Panc1 (cell line): ENCODE measurements at regions of chr11 and their contacts with region 1.

Region 1: DNA sequence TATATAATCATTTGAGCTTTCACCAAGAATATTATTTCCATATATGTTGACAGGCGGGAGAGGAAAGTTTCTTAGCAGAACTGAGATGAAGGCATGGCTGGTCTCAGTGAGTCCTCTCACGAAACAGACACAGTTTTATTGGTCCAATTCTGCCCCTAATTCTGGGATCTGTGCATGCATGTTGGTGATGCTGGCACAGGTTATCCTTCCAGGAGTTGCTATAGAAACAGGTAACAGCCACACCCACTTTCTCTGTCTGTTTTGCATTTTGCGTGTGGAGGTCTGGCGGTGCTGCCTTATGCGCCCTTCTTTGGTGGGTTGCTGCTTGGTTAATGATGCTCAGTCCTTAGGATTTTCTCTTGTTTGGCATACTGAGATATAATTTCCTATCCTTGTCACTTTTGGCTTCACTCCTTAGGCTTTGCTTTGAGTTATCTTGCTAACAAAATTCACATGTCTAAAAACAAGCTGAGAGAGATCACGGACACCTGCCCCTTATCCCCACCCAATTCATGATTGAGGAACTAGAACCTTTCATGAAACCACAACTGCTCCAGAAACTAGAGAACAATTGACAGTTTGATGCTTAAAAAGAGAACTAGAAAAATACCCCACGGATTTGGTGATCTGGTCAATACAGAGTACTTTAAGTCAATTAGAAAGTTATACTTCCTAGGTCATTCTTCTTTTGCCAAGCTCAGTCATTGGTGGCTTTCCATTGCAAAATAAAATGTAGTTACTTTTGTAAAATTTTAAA is 189.3 kb downstream of the FAT3 start:
- DNase-seq: no peak
- ATAC-seq: no peak
- H3K4me3 ChIP-seq: no peak overlapping the region
- H3K27ac ChIP-seq: no peak overlapping the region
- H3K4me1 ChIP-seq: no peaks in the 10 kb centered on the region
- H3K27me3 ChIP-seq: no peaks in the 10 kb centered on the region
- CTCF ChIP-seq: no peak

Region 2: GRCh38 chr11:92314499-92314898 is 99.4 kb before region 1 on chr11:
- CTCF ChIA-PET with region 1: no interaction called
- POLR2A ChIA-PET with region 1: interaction called, 23 read pairs
- in situ Hi-C with region 1: no loop called
- intact Hi-C with region 1: no loop called
- DNase-seq: no peak
- ATAC-seq: no peak
- H3K4me3 ChIP-seq: no peak overlapping the region
- H3K27ac ChIP-seq: no peak overlapping the region
- H3K4me1 ChIP-seq: no peaks in the 10 kb centered on the region
- H3K27me3 ChIP-seq: no peaks in the 10 kb centered on the region
- CTCF ChIP-seq: no peak

Region 3: GRCh38 chr11:92324901-92325300 is 89.0 kb before region 1 on chr11:
- CTCF ChIA-PET with region 1: no interaction called
- POLR2A ChIA-PET with region 1: no interaction called
- in situ Hi-C with region 1: no loop called
- intact Hi-C with region 1: no loop called
- DNase-seq: no peak
- ATAC-seq: no peak
- H3K4me3 ChIP-seq: no peak overlapping the region
- H3K27ac ChIP-seq: no peak overlapping the region
- H3K4me1 ChIP-seq: no peaks in the 10 kb centered on the region
- H3K27me3 ChIP-seq: no peaks in the 10 kb centered on the region
- CTCF ChIP-seq: no peak

Region 4: GRCh38 chr11:92552942-92553341 is 139.0 kb after region 1 on chr11:
- CTCF ChIA-PET with region 1: no interaction called
- POLR2A ChIA-PET with region 1: no interaction called
- in situ Hi-C with region 1: no loop called
- intact Hi-C with region 1: no loop called
- DNase-seq: no peak
- ATAC-seq: no peak
- H3K4me3 ChIP-seq: no peak overlapping the region
- H3K27ac ChIP-seq: no peak overlapping the region
- H3K4me1 ChIP-seq: no peaks in the 10 kb centered on the region
- H3K27me3 ChIP-seq: no peaks in the 10 kb centered on the region
- CTCF ChIP-seq: peak; percentile 18; the same call in 1 of the 2 replicates